ENCODE measurements at regions of chr3 and their contacts with region 1.

Region 1: GRCh38 chr3:37622999-37623883 is 238.4 kb upstream of the CTDSPL start:
- DNase-seq: no peak
- ATAC-seq: no peak
- H3K4me3 ChIP-seq: no peak overlapping the region
- H3K27ac ChIP-seq: no peak overlapping the region
- H3K4me1 ChIP-seq: no peaks in the 10 kb centered on the region
- H3K27me3 ChIP-seq: peaks cover 75% of the 10 kb centered on the region
- CTCF ChIP-seq: no peak

Region 2: GRCh38 chr3:37453393-37454389 is 169.6 kb before region 1 on chr3:
- CTCF ChIA-PET with region 1: interaction called, 12 read pairs
- POLR2A ChIA-PET with region 1: no interaction called
- intact Hi-C with region 1: no loop called
- DNase-seq: no peak
- ATAC-seq: 0 out of 2 replicates have a peak, but pooled peaks have one; percentile 13
- H3K4me3 ChIP-seq: no peak overlapping the region
- H3K27ac ChIP-seq: no peak overlapping the region
- H3K4me1 ChIP-seq: peaks cover 5% of the 10 kb centered on the region
- H3K27me3 ChIP-seq: peaks cover 71% of the 10 kb centered on the region
- CTCF ChIP-seq: no peak

Measured in PC-3 (cell line).